ENCODE measurements at regions of chr6 and their contacts with region 1.

Region 1: DNA sequence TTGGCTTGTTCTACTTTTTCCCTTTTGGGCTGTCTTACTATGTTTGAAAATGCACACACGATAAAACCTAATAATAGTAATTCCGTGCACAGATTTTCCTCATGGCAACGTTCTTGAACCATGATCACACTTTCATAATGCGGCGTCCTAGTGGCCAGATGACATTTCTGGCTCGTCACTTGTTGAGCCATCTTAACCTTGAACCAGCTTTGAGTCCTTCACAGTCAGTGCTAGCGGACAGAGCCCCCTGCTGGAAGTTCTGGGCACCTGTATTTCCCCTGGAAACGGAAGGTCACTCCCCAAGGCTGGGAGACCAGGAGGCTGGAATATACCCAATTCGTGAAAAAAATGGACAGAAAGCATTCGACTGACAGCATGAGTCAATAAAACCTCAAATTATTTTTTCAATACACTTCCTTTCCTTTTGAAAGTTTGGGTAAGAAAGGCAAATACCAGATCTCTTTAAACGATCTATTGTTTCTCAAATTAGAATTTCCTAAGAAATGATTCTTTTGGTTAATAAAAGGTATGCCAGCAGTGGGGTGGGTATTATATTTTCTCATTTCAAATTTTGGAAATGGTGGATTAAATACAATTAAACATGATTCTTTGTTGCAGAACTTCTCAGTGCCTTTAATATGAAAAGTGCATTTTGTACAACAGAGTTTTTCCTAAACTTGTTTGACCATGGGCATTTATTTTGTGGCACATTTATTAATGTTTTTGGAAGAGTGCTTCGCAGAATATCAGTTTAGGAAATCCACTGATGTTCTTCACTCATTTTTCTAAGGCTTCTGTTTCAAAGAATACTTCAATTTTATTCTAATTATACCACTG is 542.3 kb downstream of the QKI start:
- DNase-seq: peak; percentile 41
- H3K4me3 Mint-ChIP-seq: no peak overlapping the region
- H3K27ac Mint-ChIP-seq: no peak overlapping the region
- H3K4me1 Mint-ChIP-seq: no peaks in the 10 kb centered on the region
- H3K27me3 Mint-ChIP-seq: peaks cover 20% of the 10 kb centered on the region

Region 2: DNA sequence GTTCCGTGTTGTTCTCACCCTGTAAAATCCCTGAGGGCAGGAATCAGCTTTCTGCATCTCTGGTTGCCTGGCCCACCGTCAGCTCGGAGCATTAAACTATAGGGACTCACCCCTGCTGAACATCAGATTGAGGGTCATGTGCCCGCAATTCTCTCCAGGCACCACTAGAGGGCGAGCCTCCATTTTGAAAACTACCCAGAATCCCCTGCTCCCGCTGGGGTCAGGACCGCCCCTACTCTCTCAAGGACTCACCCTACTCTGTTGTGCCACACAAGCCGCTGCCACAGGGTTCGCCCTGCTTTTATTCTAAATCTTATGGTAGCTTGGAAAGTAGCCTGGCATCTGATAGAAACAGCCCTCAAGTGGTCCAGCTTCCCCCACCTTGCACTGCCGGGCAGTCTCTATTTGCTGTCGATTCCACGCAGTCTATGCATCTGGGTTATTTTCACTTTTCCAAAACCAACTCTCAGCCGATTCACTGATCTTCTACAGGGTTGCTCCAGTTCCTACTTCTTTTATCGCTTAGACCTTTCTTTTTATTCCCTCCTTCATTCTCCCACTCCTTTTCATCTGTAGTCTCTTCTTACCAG is 786.4 kb before region 1 on chr6:
- intact Hi-C with region 1: loop called (anchors 5 kb)
- DNase-seq: no peak
- H3K4me3 Mint-ChIP-seq: no peak overlapping the region
- H3K27ac Mint-ChIP-seq: no peak overlapping the region
- H3K4me1 Mint-ChIP-seq: no peaks in the 10 kb centered on the region
- H3K27me3 Mint-ChIP-seq: no peaks in the 10 kb centered on the region

Region 3: DNA sequence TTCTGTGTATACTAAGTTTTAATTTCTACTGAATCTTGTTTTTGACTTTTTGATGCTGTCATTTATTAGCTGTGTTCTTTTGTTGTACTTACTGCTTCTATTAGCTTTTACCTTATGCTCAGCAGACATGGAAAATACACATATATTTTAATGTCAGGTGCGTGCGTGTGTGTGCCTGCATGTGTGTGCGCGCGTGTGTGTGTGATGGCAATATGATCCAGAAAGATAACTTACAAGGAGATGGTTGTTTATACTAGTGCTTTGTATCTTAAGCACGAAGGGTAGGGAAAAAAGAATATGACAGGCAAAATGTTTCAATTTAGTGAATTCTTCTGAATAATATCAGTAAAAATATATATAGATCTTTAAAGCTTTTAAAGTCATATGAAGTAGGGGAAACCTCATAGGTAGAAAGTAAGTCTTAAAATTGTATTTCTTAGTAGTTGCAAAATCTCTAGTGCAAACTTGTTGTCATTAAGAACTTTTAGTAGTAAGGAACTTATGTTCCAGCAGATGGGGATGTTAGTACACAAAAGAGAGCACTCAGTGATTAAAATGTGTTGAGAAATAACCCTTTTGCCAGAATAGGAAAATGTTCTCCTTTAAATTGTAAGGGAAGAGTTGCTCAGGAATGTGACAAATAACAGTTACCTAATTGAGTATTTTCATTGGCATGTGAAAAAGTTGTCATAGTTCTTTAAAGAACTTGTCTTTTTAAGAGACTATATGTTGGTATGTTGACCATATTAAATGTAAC is 529.1 kb before region 1 on chr6:
- intact Hi-C with region 1: loop called (anchors 1 kb)
- DNase-seq: no peak
- H3K4me3 Mint-ChIP-seq: no peak overlapping the region
- H3K27ac Mint-ChIP-seq: no peak overlapping the region
- H3K4me1 Mint-ChIP-seq: peaks cover 16% of the 10 kb centered on the region
- H3K27me3 Mint-ChIP-seq: no peaks in the 10 kb centered on the region

Region 4: GRCh38 chr6:164927288-164928056 is 970.7 kb after region 1 on chr6:
- intact Hi-C with region 1: loop called (anchors 10 kb)
- DNase-seq: peak; percentile 18
- H3K4me3 Mint-ChIP-seq: no peak overlapping the region
- H3K27ac Mint-ChIP-seq: no peak overlapping the region
- H3K4me1 Mint-ChIP-seq: no peaks in the 10 kb centered on the region
- H3K27me3 Mint-ChIP-seq: no peaks in the 10 kb centered on the region

Measured in activated T-helper 1 cell treated with anti-CD3 and anti-CD28 coated beads, Interleukin-12 subunit alpha, Interleukin-12 subunit beta, Interleukin-2, Interleukin-4 antibody, amounts not matched to agents 30 ng/mL and 10 ng/mL and 1 ng/mL, durations not matched to agents 14 hours and 24 hours and 36 hours (primary cell).